Activated CD4-positive, alpha-beta T cell treated with anti-CD3 and anti-CD28 coated beads, Interleukin-2, amount 10 ng/mL, durations not matched to agents 24 days and 14 days (primary cell): ENCODE measurements at regions of chr12 and their contacts with region 1.

Region 1: DNA sequence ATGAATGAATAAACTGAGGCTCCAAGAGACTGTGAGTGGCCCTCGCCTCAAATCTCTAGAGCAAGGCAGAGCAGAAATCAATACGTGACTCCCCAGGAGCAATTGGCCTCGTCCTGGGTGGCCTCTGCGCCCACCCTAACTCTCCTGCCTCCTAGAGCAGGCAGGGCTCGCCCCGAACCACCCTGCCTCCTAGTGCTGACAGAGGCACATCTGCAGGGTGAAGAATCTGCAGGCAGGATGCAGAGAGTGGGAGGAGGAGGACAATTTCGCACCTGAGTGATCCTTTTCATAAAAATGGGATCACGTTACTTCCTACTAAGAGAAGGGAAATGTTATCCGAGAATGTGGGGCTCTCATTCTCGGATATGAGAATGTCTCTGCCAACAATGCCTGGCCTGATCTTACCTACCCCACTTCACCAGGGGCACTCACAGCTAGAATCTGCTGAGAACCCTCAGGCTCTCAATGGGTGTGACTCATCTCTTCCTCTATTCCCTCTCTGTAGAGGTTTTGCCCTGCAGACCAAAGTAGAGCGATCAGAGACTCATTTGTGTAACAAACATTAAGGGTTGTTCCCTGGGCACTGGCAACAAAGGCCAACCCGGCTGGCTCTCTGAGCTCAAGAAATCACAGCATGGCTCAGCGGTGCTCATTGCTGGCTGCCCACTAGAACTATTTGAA is 61.7 kb upstream of the BCL2L14 start:
- DNase-seq: peak; percentile 89
- H3K4me3 Mint-ChIP-seq: peak overlapping the region; percentile 74
- H3K27ac Mint-ChIP-seq: peak overlapping the region; percentile 97
- H3K4me1 Mint-ChIP-seq: peaks cover 73% of the 10 kb centered on the region
- H3K27me3 Mint-ChIP-seq: peaks cover 2% of the 10 kb centered on the region

Region 2: DNA sequence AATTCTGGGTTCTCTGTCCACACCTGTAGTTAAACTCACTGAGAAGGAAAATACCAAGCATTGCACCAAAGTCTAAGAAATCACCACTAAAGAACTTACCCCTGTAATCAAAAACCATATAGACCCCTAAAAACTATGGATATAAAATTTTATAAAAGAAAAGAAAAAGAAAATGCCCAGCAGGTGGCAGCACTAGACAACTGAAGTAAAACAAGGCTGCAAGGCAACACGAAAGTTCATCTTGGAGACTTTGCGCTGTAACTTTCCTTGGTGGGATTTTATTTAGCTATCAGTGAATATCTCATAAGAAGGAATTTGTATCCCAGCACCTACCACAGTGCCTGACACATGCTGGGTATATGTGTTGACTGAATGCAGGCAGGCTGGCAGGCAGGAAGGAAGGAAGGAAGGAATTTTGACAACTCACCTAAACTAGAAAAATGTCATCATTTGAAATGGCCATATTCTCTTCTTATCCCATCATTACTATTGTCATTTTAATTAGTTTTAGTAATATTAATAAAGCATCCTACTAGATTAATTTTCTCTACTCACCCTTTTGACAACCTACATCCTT is 427.8 kb before region 1 on chr12:
- intact Hi-C with region 1: loop called (anchors 1 kb)
- DNase-seq: peak; percentile 90
- H3K4me3 Mint-ChIP-seq: no peak overlapping the region
- H3K27ac Mint-ChIP-seq: no peak overlapping the region
- H3K4me1 Mint-ChIP-seq: peaks cover 26% of the 10 kb centered on the region
- H3K27me3 Mint-ChIP-seq: peaks cover 8% of the 10 kb centered on the region

Region 3: GRCh38 chr12:11730299-11731041 is 278.6 kb before region 1 on chr12:
- intact Hi-C with region 1: loop called (anchors 1 kb)
- DNase-seq: peak; percentile 69
- H3K4me3 Mint-ChIP-seq: peak overlapping the region; percentile 83
- H3K27ac Mint-ChIP-seq: peak overlapping the region; percentile 95
- H3K4me1 Mint-ChIP-seq: peaks cover 80% of the 10 kb centered on the region
- H3K27me3 Mint-ChIP-seq: no peaks in the 10 kb centered on the region

Region 4: GRCh38 chr12:11780521-11781101 is 228.5 kb before region 1 on chr12:
- intact Hi-C with region 1: loop called (anchors 1 kb)
- DNase-seq: peak; percentile 54
- H3K4me3 Mint-ChIP-seq: peak overlapping the region; percentile 29
- H3K27ac Mint-ChIP-seq: peak overlapping the region; percentile 87
- H3K4me1 Mint-ChIP-seq: peaks cover 66% of the 10 kb centered on the region
- H3K27me3 Mint-ChIP-seq: no peaks in the 10 kb centered on the region

Region 5: GRCh38 chr12:11958221-11959091 is 50.6 kb before region 1 on chr12:
- intact Hi-C with region 1: loop called (anchors 1 kb)
- DNase-seq: peak; percentile 85
- H3K4me3 Mint-ChIP-seq: peak overlapping the region; percentile 27
- H3K27ac Mint-ChIP-seq: peak overlapping the region; percentile 91
- H3K4me1 Mint-ChIP-seq: peaks cover 57% of the 10 kb centered on the region
- H3K27me3 Mint-ChIP-seq: no peaks in the 10 kb centered on the region

Region 6: GRCh38 chr12:12032851-12033588 is 23.9 kb after region 1 on chr12:
- intact Hi-C with region 1: loop called (anchors 1 kb)
- DNase-seq: peak; percentile 90
- H3K4me3 Mint-ChIP-seq: peak overlapping the region; percentile 81
- H3K27ac Mint-ChIP-seq: peak overlapping the region; percentile 93
- H3K4me1 Mint-ChIP-seq: peaks cover 59% of the 10 kb centered on the region
- H3K27me3 Mint-ChIP-seq: no peaks in the 10 kb centered on the region